ENCODE measurements at regions of chr9 and their contacts with region 1.

Region 1: GRCh38 chr9:113511856-113512761 is 48.6 kb downstream of the RGS3 start:
- DNase-seq: peak; percentile 17 to 82 (median 40)
- ATAC-seq: peak; percentile 74
- H3K4me3 ChIP-seq: peak overlapping the region; percentile 42
- H3K4me3 Mint-ChIP-seq: peak overlapping the region; percentile 72 to 88 (median 84)
- H3K27ac ChIP-seq: peak overlapping the region; percentile 64
- H3K27ac Mint-ChIP-seq: peak overlapping the region; percentile 85 to 97 (median 94)
- H3K4me1 ChIP-seq: peaks cover 43 to 57% of the 10 kb centered on the region in 2 donors
- H3K4me1 Mint-ChIP-seq: peaks cover 41 to 69% (median 60%) of the 10 kb centered on the region in 7 donors
- H3K27me3 ChIP-seq: no peaks in the 10 kb centered on the region
- H3K27me3 Mint-ChIP-seq: no peaks in the 10 kb centered on the region

Region 2: DNA sequence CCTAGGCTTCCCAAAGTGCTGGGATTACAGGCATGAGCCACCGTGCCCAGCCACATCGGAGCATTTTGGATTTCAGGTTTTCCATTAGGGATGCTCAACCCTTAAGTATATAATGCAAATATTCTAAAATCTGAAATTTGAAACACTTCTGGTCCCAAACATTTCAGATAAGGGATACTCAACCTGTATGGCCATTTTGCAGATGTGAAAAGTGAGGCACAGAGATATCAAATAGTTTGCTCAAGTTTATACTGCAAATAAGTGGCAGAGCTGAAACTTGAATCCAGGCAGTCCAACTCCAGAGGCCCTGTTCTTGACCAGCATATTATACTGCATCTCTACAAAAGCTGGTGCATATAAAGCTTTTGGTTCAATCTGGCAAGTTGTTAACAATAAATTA is 174.4 kb before region 1 on chr9:
- CTCF ChIA-PET with region 1: no interaction called
- POLR2A ChIA-PET with region 1: no interaction called
- intact Hi-C with region 1: no loop called
- DNase-seq: no peak
- ATAC-seq: no peak
- H3K4me3 ChIP-seq: no peak overlapping the region
- H3K4me3 Mint-ChIP-seq: no peak overlapping the region
- H3K27ac ChIP-seq: no peak overlapping the region
- H3K27ac Mint-ChIP-seq: no peak overlapping the region
- H3K4me1 ChIP-seq: peaks cover 4 to 20% of the 10 kb centered on the region in 2 donors
- H3K4me1 Mint-ChIP-seq: peaks cover 11 to 42% (median 28%) of the 10 kb centered on the region in 7 donors
- H3K27me3 ChIP-seq: no peaks in the 10 kb centered on the region
- H3K27me3 Mint-ChIP-seq: peaks cover 0 to 7% (median 0%) of the 10 kb centered on the region in 5 donors

Region 3: GRCh38 chr9:113349445-113350094 is 162.5 kb before region 1 on chr9 and contains the start of gene BSPRY:
- CTCF ChIA-PET with region 1: no interaction called
- POLR2A ChIA-PET with region 1: no interaction called
- intact Hi-C with region 1: loop called in 1 of 2 experiments (anchors 5 kb)
- DNase-seq: peak in 7 of 9 donors; percentile 27 to 67 (median 44)
- ATAC-seq: peak; percentile 70
- H3K4me3 ChIP-seq: peak within 1 kb of the TSS; percentile 54
- H3K4me3 Mint-ChIP-seq: peak within 1 kb of the TSS; percentile 73 to 93 (median 81)
- H3K27ac ChIP-seq: no peak within 1 kb of the TSS
- H3K27ac Mint-ChIP-seq: peak within 1 kb of the TSS in 3 of 9 donors; percentile 5 to 87 (median 57)
- H3K4me1 ChIP-seq: peaks cover 13 to 15% of the 10 kb centered on the region in 2 donors
- H3K4me1 Mint-ChIP-seq: peaks cover 10 to 49% (median 21%) of the 10 kb centered on the region in 7 donors
- H3K27me3 ChIP-seq: peaks cover 3 to 5% of the 10 kb centered on the region in 2 donors
- H3K27me3 Mint-ChIP-seq: peaks cover 0 to 40% (median 29%) of the 10 kb centered on the region in 5 donors
- total RNA-seq, gene BSPRY: 0.13 to 9.6 (median 1.2) TPM in 3 of 5 experiments, not detected in the others

Region 4: DNA sequence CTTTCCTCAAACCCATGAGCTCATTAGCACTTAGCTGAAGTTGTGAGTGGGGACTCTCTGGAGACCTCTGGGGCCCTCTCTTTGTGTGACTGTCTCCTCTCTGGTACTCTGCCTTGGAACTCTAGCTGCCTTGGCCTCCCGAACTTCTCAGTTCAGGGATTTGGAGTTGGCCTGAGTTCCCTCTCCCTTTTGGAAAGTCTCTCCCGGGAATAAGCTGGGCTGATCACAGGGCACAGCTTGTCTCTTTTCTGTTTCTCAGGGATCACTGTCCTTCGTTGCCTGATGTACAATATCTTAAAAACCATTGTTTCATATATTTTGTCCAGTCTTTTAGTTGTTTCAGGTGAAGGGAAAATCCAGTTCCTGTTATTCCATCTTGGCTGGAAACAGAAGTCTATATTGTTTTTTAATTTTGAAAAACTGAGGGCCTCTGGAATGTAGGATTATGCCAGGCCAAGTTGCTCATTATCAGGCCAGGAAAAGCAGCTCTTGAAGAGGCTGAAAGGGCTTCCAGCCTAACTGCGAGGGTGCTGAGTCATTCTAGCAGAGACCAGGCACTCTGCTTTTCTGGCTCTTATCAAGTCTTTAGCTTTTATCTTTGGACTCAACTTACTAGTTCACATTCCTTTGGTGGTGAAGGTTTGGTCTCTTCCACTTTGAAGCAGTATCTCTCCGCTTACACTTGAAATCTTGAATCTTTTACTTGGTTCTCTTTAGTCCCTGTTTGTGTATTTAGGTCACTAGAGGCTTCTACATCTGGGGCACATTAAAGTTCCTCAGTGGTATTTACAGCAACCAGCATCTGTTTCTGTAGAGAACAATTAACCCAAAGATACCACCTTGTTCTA is 57.0 kb before region 1 on chr9:
- CTCF ChIA-PET with region 1: no interaction called
- POLR2A ChIA-PET with region 1: no interaction called
- intact Hi-C with region 1: loop called (anchors 5 kb)
- DNase-seq: no peak
- ATAC-seq: no peak
- H3K4me3 ChIP-seq: no peak overlapping the region
- H3K4me3 Mint-ChIP-seq: no peak overlapping the region
- H3K27ac ChIP-seq: no peak overlapping the region
- H3K27ac Mint-ChIP-seq: peak overlapping the region in 1 of 9 donors; percentile 59
- H3K4me1 ChIP-seq: no peaks in the 10 kb centered on the region
- H3K4me1 Mint-ChIP-seq: peaks cover 0 to 17% (median 0%) of the 10 kb centered on the region in 7 donors
- H3K27me3 ChIP-seq: no peaks in the 10 kb centered on the region
- H3K27me3 Mint-ChIP-seq: no peaks in the 10 kb centered on the region

Region 5: DNA sequence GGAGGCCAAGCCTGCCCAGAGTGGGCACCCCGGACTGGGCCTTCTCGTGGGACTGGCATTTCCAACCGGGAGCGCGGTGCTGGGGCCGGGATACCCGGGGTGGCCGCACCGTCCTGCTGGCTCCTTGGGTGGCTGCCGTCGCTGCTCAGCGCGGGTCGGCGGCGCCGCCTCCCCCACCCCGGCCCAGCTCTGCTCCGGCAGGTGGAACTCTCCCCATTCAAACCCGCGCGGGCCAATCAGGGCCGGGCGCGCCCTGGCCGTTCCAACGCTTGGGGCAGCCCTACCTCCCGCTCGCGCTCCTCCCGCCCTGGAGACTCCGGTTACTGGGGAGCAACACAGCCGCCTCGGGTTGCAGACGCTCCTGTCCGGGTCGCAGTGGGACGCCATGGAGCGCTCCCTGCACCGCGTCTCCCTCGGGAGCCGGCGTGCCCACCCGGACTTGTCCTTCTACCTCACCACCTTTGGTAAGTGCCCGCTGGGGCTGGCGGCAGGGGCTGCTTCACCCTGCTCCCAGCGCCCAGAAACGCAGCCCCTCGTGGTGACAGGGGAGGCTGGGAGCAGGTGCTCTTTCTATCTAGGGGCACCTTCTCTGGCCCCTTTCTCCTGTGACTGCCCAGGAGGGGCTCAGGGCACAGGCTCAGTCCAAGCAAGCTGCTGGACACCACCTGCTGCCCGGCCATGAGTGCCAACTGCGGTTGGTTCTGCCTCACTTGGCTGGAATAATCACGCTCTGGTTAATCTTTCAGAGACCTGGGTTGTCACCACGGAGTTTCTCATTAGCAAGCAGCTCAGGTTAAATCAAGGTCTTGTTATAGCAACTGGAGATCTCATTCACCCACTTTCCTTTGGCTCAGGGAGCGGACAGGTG is 48.5 kb before region 1 on chr9 and contains the start of gene RGS3:
- CTCF ChIA-PET with region 1: no interaction called
- POLR2A ChIA-PET with region 1: no interaction called
- intact Hi-C with region 1: loop called (anchors 5 kb)
- DNase-seq: no peak
- ATAC-seq: no peak
- H3K4me3 ChIP-seq: no peak within 1 kb of the TSS
- H3K4me3 Mint-ChIP-seq: no peak within 1 kb of the TSS
- H3K27ac ChIP-seq: no peak within 1 kb of the TSS
- H3K27ac Mint-ChIP-seq: no peak within 1 kb of the TSS
- H3K4me1 ChIP-seq: no peaks in the 10 kb centered on the region
- H3K4me1 Mint-ChIP-seq: peaks cover 0 to 5% (median 0%) of the 10 kb centered on the region in 7 donors
- H3K27me3 ChIP-seq: no peaks in the 10 kb centered on the region
- H3K27me3 Mint-ChIP-seq: peaks cover 0 to 2% (median 0%) of the 10 kb centered on the region in 5 donors
- total RNA-seq, gene RGS3: 5.8 to 43.4 (median 12.6) TPM

Region 6: DNA sequence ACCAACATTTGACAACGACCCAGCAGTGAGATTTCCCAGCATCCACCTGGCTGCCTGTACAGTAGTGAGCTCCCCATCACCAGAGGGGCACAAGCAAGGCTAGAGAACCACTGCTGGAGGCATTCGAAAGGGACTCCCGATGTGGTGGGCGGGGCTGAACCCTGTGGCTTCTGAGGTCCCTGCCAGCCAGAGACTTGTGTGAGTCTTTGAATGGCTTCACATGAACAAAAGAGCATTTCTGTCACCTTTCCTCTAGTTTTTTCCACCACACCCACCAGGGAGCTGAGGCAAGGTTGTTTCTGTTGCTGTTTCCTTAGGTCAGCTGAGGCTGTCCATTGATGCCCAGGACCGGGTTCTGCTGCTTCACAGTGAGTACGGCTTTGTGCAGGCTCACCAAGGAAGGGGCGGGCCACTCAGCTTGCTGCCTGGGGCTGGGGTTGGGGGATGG is 32.9 kb before region 1 on chr9:
- CTCF ChIA-PET with region 1: no interaction called
- POLR2A ChIA-PET with region 1: interaction called, 3 read pairs
- intact Hi-C with region 1: loop called in 1 of 2 experiments (anchors 5 kb)
- DNase-seq: peak in 1 of 9 donors; percentile 11
- ATAC-seq: no peak
- H3K4me3 ChIP-seq: no peak overlapping the region
- H3K4me3 Mint-ChIP-seq: peak overlapping the region in 2 of 10 donors; percentile 14 to 34
- H3K27ac ChIP-seq: no peak overlapping the region
- H3K27ac Mint-ChIP-seq: peak overlapping the region in 1 of 9 donors; percentile 10
- H3K4me1 ChIP-seq: peaks cover 5 to 10% of the 10 kb centered on the region in 2 donors
- H3K4me1 Mint-ChIP-seq: peaks cover 8 to 18% (median 14%) of the 10 kb centered on the region in 7 donors
- H3K27me3 ChIP-seq: no peaks in the 10 kb centered on the region
- H3K27me3 Mint-ChIP-seq: peaks cover 0 to 4% (median 0%) of the 10 kb centered on the region in 5 donors

Region 7: GRCh38 chr9:113523421-113524236 is 11.5 kb after region 1 on chr9:
- CTCF ChIA-PET with region 1: interaction called, 4 read pairs
- POLR2A ChIA-PET with region 1: interaction called, 23 read pairs
- intact Hi-C with region 1: loop called (anchors 1 kb)
- DNase-seq: peak in 2 of 9 donors; percentile 27 to 84
- ATAC-seq: peak; percentile 63
- H3K4me3 ChIP-seq: peak overlapping the region; percentile 53
- H3K4me3 Mint-ChIP-seq: peak overlapping the region; percentile 54 to 80 (median 70)
- H3K27ac ChIP-seq: peak overlapping the region; percentile 42
- H3K27ac Mint-ChIP-seq: peak overlapping the region; percentile 64 to 91 (median 79)
- H3K4me1 ChIP-seq: peaks cover 65 to 79% of the 10 kb centered on the region in 2 donors
- H3K4me1 Mint-ChIP-seq: peaks cover 61 to 87% (median 71%) of the 10 kb centered on the region in 7 donors
- H3K27me3 ChIP-seq: no peaks in the 10 kb centered on the region
- H3K27me3 Mint-ChIP-seq: no peaks in the 10 kb centered on the region

Region 8: DNA sequence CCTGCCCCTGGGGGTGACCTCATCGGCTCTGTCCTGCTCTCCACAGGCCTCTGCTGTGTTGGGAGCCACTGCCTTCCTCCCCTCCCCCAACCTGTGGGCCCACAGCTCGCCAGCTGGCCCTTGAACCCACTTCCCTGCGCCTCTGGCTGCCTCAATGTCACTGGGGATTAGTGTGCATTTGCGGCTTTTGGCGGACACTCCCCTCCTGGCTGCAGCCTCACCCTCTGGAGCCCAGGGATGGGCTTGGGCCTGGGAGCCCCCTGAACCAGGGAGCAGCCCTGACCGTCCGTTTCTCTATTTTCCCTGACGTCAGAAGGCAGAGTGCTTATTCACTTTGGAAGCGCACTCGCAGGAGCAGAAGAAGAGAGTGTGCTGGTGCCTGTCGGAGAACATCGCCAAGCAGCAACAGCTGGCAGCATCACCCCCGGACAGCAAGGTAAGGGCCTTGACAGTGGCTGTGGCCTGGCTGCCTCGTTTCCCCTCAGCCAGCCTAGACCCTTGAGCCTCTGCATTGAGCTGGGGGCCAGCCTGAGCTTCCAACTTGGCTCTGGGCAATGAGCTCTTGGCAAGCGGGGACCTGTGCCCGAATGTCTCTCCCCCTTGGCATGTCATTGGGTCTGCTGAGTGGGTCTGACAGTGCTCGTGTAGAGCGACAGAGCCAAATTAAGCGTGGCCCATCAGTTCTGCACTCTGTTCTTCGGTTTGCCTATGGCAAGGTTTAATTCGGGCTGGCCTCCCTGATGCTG is 24.5 kb after region 1 on chr9:
- CTCF ChIA-PET with region 1: no interaction called
- POLR2A ChIA-PET with region 1: no interaction called
- intact Hi-C with region 1: no loop called
- DNase-seq: no peak
- ATAC-seq: no peak
- H3K4me3 ChIP-seq: no peak overlapping the region
- H3K4me3 Mint-ChIP-seq: no peak overlapping the region
- H3K27ac ChIP-seq: no peak overlapping the region
- H3K27ac Mint-ChIP-seq: peak overlapping the region in 1 of 9 donors; percentile 25
- H3K4me1 ChIP-seq: no peaks in the 10 kb centered on the region
- H3K4me1 Mint-ChIP-seq: peaks cover 0 to 17% (median 4%) of the 10 kb centered on the region in 7 donors
- H3K27me3 ChIP-seq: no peaks in the 10 kb centered on the region
- H3K27me3 Mint-ChIP-seq: no peaks in the 10 kb centered on the region

Region 9: GRCh38 chr9:113772121-113772810 is 260.2 kb after region 1 on chr9:
- CTCF ChIA-PET with region 1: no interaction called
- POLR2A ChIA-PET with region 1: no interaction called
- intact Hi-C with region 1: no loop called
- DNase-seq: no peak
- ATAC-seq: no peak
- H3K4me3 ChIP-seq: no peak overlapping the region
- H3K4me3 Mint-ChIP-seq: no peak overlapping the region
- H3K27ac ChIP-seq: no peak overlapping the region
- H3K27ac Mint-ChIP-seq: no peak overlapping the region
- H3K4me1 ChIP-seq: no peaks in the 10 kb centered on the region
- H3K4me1 Mint-ChIP-seq: peaks cover 0 to 2% (median 0%) of the 10 kb centered on the region in 7 donors
- H3K27me3 ChIP-seq: no peaks in the 10 kb centered on the region
- H3K27me3 Mint-ChIP-seq: peaks cover 3 to 40% (median 25%) of the 10 kb centered on the region in 5 donors

Region 10: GRCh38 chr9:115285836-115286235 is 1773.7 kb after region 1 on chr9:
- CTCF ChIA-PET with region 1: no interaction called
- POLR2A ChIA-PET with region 1: no interaction called
- intact Hi-C with region 1: no loop called
- DNase-seq: no peak
- ATAC-seq: no peak
- H3K4me3 ChIP-seq: no peak overlapping the region
- H3K4me3 Mint-ChIP-seq: no peak overlapping the region
- H3K27ac ChIP-seq: no peak overlapping the region
- H3K27ac Mint-ChIP-seq: no peak overlapping the region
- H3K4me1 ChIP-seq: no peaks in the 10 kb centered on the region
- H3K4me1 Mint-ChIP-seq: peaks cover 0 to 5% (median 0%) of the 10 kb centered on the region in 7 donors
- H3K27me3 ChIP-seq: no peaks in the 10 kb centered on the region
- H3K27me3 Mint-ChIP-seq: peaks cover 3 to 29% (median 22%) of the 10 kb centered on the region in 5 donors